Posterior vena cava (tissue), 2 donors: ENCODE measurements at regions of chr7 and their contacts with region 1.

Region 1: DNA sequence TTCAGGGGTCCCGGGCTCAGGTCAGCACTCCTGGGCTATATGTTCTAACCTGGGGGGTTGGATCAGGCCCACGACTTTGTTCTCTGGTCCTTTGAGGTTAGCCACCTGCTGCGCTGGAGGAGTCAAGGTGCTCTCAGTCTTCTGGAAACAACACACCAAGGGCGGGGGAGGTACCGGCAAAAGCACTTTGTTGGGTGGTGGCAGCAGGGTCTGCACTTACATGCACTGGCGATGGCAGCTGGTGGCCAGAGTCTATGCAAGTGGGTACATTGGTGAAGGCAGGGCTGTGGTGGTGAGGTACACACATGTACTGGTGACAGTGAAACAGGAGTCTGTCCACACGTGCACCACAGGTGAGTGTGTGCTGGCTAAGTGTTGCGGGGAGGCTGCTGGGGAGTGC is 194.2 kb upstream of the MAGI2 start:
- DNase-seq: peak; percentile 58

Region 2: GRCh38 chr7:78265071-78265470 is 1382.6 kb before region 1 on chr7:
- intact Hi-C with region 1: loop called in 1 of 2 experiments (anchors 5 kb)
- DNase-seq: no peak

Region 3: DNA sequence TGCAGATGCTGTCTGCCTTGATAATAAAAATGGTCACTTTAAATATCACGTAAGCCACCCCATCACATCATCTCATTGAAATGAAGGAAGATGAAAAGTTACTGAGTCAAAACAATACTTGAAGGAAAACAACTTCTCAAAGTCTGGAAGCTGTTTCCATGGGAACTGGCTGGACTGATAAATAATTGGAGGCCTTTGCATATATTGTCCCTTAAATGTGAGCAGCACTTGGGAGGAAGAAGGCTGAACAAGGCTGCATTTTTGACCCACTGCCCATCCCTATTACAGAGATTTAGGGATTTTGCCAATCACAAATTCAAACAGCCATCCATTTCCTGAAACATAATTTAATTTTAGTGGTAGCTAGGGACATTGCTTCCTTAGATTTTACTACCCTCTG is 176.0 kb before region 1 on chr7:
- intact Hi-C with region 1: no loop called
- DNase-seq: no peak

Region 4: GRCh38 chr7:79789584-79790345 is 142.1 kb after region 1 on chr7:
- intact Hi-C with region 1: no loop called
- DNase-seq: no peak